MCF 10A (cell line): ENCODE measurements at regions of chr4 and their contacts with region 1.

Region 1: GRCh38 chr4:107863850-107864371 is 39.2 kb downstream of the SGMS2 start:
- DNase-seq: peak; percentile 84
- H3K4me3 Mint-ChIP-seq: no peak overlapping the region
- H3K27ac Mint-ChIP-seq: peak overlapping the region; percentile 98
- H3K4me1 Mint-ChIP-seq: peaks cover 26% of the 10 kb centered on the region
- H3K27me3 Mint-ChIP-seq: no peaks in the 10 kb centered on the region
- CTCF ChIP-seq: no peak

Region 2: DNA sequence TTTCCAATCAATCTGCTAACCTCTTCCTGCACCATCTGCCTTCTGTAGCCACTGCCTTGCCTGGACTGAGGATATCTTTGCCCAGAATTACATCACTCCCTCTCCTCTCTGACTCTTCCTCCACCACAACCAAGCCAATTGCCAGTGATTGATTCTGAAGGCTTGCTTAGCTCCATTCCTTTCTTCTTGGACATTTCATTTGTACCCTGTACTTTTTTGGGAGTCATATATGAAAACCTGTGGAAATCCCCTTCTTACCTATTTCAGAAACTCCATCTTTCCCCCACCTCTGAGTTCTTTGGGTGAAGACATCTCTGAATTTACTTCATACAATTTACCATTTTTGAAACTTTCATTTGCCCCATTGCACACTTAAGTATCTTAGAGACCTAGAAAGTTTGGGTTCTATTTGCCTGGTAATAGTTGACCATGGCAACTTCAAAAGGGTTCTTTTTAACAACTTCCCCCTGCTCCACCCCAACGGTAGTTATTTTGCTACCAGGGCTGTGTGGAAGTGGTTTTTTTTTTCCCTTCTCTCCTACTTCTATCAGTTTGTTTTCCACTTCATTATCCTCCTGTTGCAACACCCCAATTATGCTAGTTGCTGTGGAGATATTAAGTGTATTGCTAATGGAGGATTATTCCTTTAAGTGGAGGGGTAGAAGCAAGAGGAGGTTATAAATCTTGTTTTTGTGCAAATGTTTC is 24.9 kb before region 1 on chr4:
- CTCF ChIA-PET with region 1: interaction called, 3 read pairs
- POLR2A ChIA-PET with region 1: interaction called, 248 read pairs
- intact Hi-C with region 1: loop called (anchors 1 kb)
- DNase-seq: peak; percentile 48
- H3K4me3 Mint-ChIP-seq: no peak overlapping the region
- H3K27ac Mint-ChIP-seq: no peak overlapping the region
- H3K4me1 Mint-ChIP-seq: peaks cover 20% of the 10 kb centered on the region
- H3K27me3 Mint-ChIP-seq: no peaks in the 10 kb centered on the region
- CTCF ChIP-seq: no peak

Region 3: GRCh38 chr4:107853444-107854355 is 10.2 kb before region 1 on chr4:
- CTCF ChIA-PET with region 1: interaction called, 5 read pairs
- POLR2A ChIA-PET with region 1: interaction called, 20 read pairs
- intact Hi-C with region 1: no loop called
- DNase-seq: no peak
- H3K4me3 Mint-ChIP-seq: no peak overlapping the region
- H3K27ac Mint-ChIP-seq: peak overlapping the region; percentile 88
- H3K4me1 Mint-ChIP-seq: peaks cover 58% of the 10 kb centered on the region
- H3K27me3 Mint-ChIP-seq: no peaks in the 10 kb centered on the region
- CTCF ChIP-seq: no peak